ENCODE measurements at regions of chr4 and their contacts with region 1.

Region 1: DNA sequence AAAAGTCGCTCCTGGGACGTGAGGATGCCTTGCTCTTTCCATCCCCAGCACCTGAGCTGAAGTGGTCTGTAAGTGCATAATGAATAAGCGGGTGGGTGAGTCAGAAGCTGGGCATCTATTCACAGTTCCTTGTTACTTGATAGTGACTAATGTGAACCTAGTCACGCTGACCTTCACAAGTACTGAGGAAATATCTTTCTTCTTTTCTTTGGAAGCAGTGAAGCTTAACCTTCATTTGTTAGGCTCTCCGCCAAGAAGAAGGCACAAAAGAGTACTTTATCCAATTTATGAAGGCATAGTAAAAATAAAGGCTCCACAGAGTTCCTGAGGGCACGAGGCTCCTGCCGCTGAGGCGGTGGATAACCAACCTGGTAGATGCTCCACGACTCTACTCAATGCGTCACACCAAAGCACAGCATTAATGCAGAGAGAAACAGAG is 475.7 kb upstream of the SLIT2 start:
- DNase-seq: peak; percentile 68 to 87
- H3K4me3 ChIP-seq: no peak overlapping the region
- H3K27ac ChIP-seq: peak overlapping the region; percentile 51; the same call in 1 of the 2 replicates
- H3K4me1 ChIP-seq: peaks cover 3% of the 10 kb centered on the region; the same call in 1 of the 2 replicates
- H3K27me3 ChIP-seq: no peaks in the 10 kb centered on the region
- CTCF ChIP-seq: no peak

Region 2: GRCh38 chr4:19689511-19689910 is 86.5 kb before region 1 on chr4:
- CTCF ChIA-PET with region 1: no interaction called
- POLR2A ChIA-PET with region 1: no interaction called
- intact Hi-C with region 1: loop called (anchors 5 kb)
- DNase-seq: no peak
- H3K4me3 ChIP-seq: no peak overlapping the region
- H3K27ac ChIP-seq: no peak overlapping the region
- H3K4me1 ChIP-seq: no peaks in the 10 kb centered on the region
- H3K27me3 ChIP-seq: no peaks in the 10 kb centered on the region
- CTCF ChIP-seq: no peak

Region 3: DNA sequence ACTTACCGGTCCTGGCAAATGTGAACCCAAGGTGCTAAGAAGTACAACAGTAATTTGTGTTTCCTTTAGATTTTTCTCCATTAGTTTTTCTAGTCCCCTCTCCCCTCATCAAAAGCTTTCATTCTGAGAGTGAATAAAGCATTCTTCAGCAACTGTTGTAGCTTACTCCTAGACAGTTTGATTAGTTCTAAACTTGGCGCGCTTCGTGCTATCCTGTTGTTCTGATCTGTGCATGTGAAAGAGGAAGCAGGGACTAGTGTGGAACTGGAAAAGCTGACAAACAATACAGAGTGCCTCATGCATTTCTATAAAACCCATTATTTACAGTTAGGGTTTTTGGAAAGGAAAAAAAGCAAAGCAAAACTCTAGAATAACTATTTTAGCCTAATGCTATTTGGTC is 81.2 kb before region 1 on chr4:
- CTCF ChIA-PET with region 1: interaction called, 16 read pairs
- POLR2A ChIA-PET with region 1: no interaction called
- intact Hi-C with region 1: loop called (anchors 5 kb)
- DNase-seq: no peak
- H3K4me3 ChIP-seq: no peak overlapping the region
- H3K27ac ChIP-seq: no peak overlapping the region
- H3K4me1 ChIP-seq: no peaks in the 10 kb centered on the region
- H3K27me3 ChIP-seq: no peaks in the 10 kb centered on the region
- CTCF ChIP-seq: no peak

Region 4: DNA sequence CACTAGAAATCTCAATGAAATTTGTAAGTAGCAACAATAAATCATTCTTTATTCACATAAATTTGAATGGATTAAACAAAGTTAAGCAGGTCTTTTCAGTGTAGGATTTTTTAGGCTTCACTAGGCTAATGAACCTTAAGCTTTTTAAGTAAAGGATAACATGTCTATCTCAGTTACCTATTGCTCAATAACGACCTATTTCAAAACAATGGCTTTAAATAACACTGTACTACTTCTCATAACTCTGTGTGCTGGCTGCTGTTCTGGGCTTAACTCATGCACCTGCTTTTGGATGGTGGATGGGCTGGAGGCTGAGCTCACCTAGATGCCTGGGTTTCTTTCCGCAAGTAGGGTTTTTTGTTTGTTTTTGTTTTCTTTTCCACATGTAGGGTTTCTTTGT is 19.4 kb before region 1 on chr4:
- CTCF ChIA-PET with region 1: no interaction called
- POLR2A ChIA-PET with region 1: no interaction called
- intact Hi-C with region 1: no loop called
- DNase-seq: no peak
- H3K4me3 ChIP-seq: no peak overlapping the region
- H3K27ac ChIP-seq: no peak overlapping the region
- H3K4me1 ChIP-seq: no peaks in the 10 kb centered on the region
- H3K27me3 ChIP-seq: no peaks in the 10 kb centered on the region
- CTCF ChIP-seq: no peak

Region 5: DNA sequence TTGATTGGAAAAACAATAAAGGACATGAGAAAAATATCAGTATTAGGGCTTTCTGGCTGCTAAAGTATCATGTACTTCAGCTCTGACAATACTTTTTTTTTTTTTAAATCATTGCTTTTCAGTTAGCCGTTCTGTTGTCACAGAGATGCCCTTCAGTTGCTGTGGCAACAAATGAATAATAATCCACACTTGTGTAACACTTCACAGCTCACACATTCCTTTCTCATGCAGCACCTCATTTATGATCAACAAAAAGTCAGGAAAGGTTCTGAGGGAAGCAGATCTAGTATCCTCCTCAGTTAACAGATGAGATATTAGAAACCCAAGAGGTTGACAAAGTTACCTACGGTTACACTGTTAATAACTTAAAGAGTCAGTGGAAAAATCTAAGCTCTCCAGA is 31.5 kb after region 1 on chr4:
- CTCF ChIA-PET with region 1: no interaction called
- POLR2A ChIA-PET with region 1: no interaction called
- intact Hi-C with region 1: loop called (anchors 1 kb)
- DNase-seq: peak in 1 of 2 experiments; percentile 66
- H3K4me3 ChIP-seq: no peak overlapping the region
- H3K27ac ChIP-seq: no peak overlapping the region
- H3K4me1 ChIP-seq: no peaks in the 10 kb centered on the region
- H3K27me3 ChIP-seq: no peaks in the 10 kb centered on the region
- CTCF ChIP-seq: no peak

Region 6: GRCh38 chr4:19945979-19946380 is 169.9 kb after region 1 on chr4:
- CTCF ChIA-PET with region 1: no interaction called
- POLR2A ChIA-PET with region 1: no interaction called
- intact Hi-C with region 1: loop called (anchors 5 kb)
- DNase-seq: peak in 1 of 2 experiments; percentile 41
- H3K4me3 ChIP-seq: no peak overlapping the region
- H3K27ac ChIP-seq: no peak overlapping the region
- H3K4me1 ChIP-seq: no peaks in the 10 kb centered on the region
- H3K27me3 ChIP-seq: no peaks in the 10 kb centered on the region
- CTCF ChIP-seq: no peak

Measured in PC-9 (cell line).